Activated B cell treated with CpG ODN at 0.5 μM for 24 hours (primary cell): ENCODE measurements at regions of chr6 and their contacts with region 1.

Region 1: DNA sequence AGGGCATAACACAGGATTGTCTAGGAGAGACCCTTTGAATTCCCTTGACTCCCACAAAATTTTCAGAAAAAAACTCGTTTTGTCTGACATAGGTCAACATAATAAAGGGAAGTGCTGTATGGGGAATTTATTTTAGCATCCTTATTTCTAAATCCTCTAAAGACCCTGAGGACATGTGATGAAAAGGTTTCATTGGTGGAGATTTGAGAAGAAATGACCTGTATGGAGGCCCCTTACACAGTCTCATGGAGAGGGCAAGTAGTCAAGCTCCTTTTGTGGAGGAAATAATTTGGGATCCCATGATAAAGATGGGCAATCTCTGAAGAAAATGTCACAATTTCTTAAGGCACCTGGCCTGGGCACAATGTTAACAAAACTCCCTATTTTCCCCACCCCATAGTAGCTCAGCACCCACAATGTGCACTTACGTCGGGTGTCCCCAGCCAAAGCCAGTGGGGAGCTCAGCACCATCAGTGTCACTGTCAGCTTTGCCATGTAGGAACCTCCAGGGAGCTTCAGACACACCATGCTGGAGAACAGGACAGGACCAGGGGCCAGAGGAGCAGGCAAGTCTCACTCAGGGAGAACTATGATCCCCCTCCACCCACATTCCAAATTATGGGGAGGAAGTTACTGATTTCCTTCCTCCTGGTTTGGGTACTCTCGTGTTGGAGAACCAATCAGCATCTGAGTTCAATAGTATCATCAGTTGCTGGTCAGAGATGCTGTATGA is at the start of gene HLA-DRB5:
- DNase-seq: peak; percentile 20
- ATAC-seq: peak; percentile 76
- H3K4me3 Mint-ChIP-seq: peak within 1 kb of the TSS; percentile 92
- H3K27ac Mint-ChIP-seq: peak within 1 kb of the TSS; percentile 99
- H3K4me1 Mint-ChIP-seq: peaks cover 28% of the 10 kb centered on the region
- H3K27me3 Mint-ChIP-seq: no peaks in the 10 kb centered on the region
- CTCF ChIP-seq: no peak
- total RNA-seq, gene HLA-DRB5: 196 and 199 TPM in 2 replicates

Region 2: GRCh38 chr6:32445321-32445854 is 84.5 kb before region 1 on chr6:
- CTCF ChIA-PET with region 1: no interaction called
- POLR2A ChIA-PET with region 1: interaction called, 13 read pairs
- intact Hi-C with region 1: loop called (anchors 5 kb)
- DNase-seq: no peak
- ATAC-seq: no peak
- H3K4me3 Mint-ChIP-seq: no peak overlapping the region
- H3K27ac Mint-ChIP-seq: peak overlapping the region; percentile 2
- H3K4me1 Mint-ChIP-seq: peaks cover 55% of the 10 kb centered on the region
- H3K27me3 Mint-ChIP-seq: no peaks in the 10 kb centered on the region
- CTCF ChIP-seq: no peak

Region 3: DNA sequence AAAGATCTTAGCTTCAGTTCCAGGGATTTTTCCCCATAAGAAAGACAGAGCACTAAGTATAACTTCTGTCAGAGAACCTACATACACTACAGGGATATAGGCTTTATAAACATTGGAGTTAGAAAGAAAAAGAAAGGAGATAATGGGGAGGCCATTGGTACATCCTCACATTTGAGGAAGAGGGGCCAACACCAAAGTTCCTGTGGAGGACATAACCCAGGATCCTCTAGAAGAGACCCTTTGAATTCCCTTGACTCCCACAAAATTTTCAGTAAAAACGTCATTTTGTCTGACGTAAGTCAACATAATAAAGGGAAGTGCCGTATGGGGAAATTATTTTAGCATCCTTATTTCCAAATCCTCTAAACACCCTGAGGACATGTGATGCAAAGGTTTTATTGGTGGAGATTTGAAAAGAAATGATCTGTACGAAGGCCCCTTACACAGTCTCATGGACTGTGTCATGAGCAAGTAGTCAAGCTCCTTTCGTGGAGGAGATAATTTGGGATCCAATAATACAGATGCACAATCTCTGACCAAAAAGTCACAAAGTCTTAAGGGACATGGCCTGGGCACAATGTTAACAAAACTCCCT is 57.0 kb before region 1 on chr6:
- CTCF ChIA-PET with region 1: no interaction called
- POLR2A ChIA-PET with region 1: interaction called, 19 read pairs
- intact Hi-C with region 1: no loop called
- DNase-seq: no peak
- ATAC-seq: peak; percentile 16
- H3K4me3 Mint-ChIP-seq: peak overlapping the region; percentile 80
- H3K27ac Mint-ChIP-seq: peak overlapping the region; percentile 99
- H3K4me1 Mint-ChIP-seq: peaks cover 36% of the 10 kb centered on the region
- H3K27me3 Mint-ChIP-seq: no peaks in the 10 kb centered on the region
- CTCF ChIP-seq: no peak

Region 4: DNA sequence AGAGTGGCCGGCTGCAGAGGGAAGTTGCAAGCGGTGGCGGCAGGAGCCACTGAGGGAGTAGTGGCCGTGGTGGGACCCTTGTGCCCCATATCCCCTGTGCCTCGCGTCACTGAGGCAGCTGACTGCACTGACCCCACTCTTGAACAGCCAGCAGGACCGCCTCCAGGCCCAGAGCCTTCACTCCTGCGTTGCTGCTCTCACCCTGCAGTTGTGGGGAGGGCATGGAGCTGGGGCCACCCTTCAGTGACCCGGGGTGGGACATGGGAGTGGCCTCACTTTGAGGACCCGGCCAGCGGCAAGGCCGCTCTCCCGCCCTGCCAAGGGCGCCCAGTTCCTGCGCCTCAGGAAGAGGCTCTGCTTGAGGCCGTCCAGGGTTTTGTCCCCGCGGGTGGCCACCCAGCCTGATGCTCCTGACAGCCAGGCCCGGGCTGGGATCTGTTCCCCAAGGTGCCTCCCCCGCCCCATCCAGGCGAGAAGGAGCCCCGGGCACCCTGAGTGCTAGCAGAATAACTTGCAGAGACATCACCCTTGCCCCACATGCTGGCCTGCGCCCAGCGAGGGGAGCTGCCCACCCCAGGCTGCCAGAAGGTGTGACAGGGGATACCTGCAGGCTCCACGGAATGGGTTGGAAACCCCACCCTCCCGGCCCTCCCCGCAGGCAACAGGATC is 45.8 kb before region 1 on chr6:
- CTCF ChIA-PET with region 1: no interaction called
- POLR2A ChIA-PET with region 1: interaction called, 15 read pairs
- intact Hi-C with region 1: loop called (anchors 2 kb)
- DNase-seq: no peak
- ATAC-seq: no peak
- H3K4me3 Mint-ChIP-seq: no peak overlapping the region
- H3K27ac Mint-ChIP-seq: peak overlapping the region; percentile 41
- H3K4me1 Mint-ChIP-seq: peaks cover 25% of the 10 kb centered on the region
- H3K27me3 Mint-ChIP-seq: no peaks in the 10 kb centered on the region
- CTCF ChIP-seq: no peak

Region 5: GRCh38 chr6:32589598-32590449 is 60.0 kb after region 1 on chr6 and contains the start of gene HLA-DRB1:
- CTCF ChIA-PET with region 1: interaction called, 3 read pairs
- POLR2A ChIA-PET with region 1: interaction called, 180 read pairs
- intact Hi-C with region 1: no loop called
- DNase-seq: no peak
- ATAC-seq: peak; percentile 93
- H3K4me3 Mint-ChIP-seq: peak within 1 kb of the TSS; percentile 91
- H3K27ac Mint-ChIP-seq: peak within 1 kb of the TSS; percentile 98
- H3K4me1 Mint-ChIP-seq: peaks cover 66% of the 10 kb centered on the region
- H3K27me3 Mint-ChIP-seq: no peaks in the 10 kb centered on the region
- CTCF ChIP-seq: no peak
- total RNA-seq, gene HLA-DRB1: 621 and 630 TPM in 2 replicates

Region 6: DNA sequence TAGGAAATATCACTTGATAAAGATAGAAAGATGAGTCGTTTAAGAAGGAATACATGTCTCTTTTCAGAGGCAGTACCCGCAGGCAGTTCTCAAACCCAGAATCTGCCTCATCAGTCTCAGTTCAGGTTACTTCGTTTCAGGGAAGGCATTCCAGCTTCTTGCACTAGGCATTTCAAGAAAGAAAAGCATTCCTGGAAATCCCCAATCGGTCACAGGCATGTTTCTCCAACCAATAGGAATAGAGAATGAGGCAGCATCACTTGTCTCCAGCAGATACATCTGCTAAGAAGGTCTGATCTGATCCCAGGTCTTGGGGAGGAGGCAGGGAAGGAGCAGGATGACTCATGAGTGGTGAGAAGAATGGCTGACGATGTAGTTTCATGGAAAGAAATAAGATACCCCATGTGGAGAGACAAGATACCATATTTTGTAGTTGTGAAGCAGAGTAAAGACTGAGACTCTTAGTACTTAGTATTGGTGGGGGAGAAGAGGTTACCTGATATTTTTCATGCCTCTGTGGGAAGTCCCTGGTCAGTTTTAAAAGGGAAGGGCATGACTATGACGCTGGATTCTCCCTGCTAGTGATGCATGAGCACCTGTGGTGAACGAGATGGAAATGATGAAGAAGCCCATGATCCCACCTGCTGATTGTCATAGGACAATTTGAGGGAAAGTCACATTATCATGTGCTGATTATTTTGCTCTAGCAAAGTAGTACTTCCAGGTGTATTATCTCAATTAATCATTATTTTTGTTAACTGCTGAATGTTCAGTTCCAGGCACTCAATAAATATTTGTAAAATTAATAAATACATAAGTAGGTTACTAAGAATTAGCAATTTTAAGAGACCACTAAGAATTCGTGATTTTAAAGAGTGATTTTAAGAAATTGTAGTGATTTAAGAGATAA is 80.1 kb after region 1 on chr6:
- CTCF ChIA-PET with region 1: no interaction called
- POLR2A ChIA-PET with region 1: interaction called, 27 read pairs
- intact Hi-C with region 1: no loop called
- DNase-seq: no peak
- ATAC-seq: peak; percentile 84
- H3K4me3 Mint-ChIP-seq: no peak overlapping the region
- H3K27ac Mint-ChIP-seq: no peak overlapping the region
- H3K4me1 Mint-ChIP-seq: peaks cover 56% of the 10 kb centered on the region
- H3K27me3 Mint-ChIP-seq: no peaks in the 10 kb centered on the region
- CTCF ChIP-seq: no peak